Lower leg skin (tissue), 4 donors: ENCODE measurements at regions of chr7 and their contacts with region 1.

Region 1: GRCh38 chr7:28389504-28390395 is 22.6 kb upstream of the CREB5 start:
- DNase-seq: no peak
- H3K4me3 ChIP-seq: no peak overlapping the region
- CTCF ChIP-seq: peak in 1 of 3 donors; percentile 13
- POLR2A ChIP-seq: no peak

Region 2: DNA sequence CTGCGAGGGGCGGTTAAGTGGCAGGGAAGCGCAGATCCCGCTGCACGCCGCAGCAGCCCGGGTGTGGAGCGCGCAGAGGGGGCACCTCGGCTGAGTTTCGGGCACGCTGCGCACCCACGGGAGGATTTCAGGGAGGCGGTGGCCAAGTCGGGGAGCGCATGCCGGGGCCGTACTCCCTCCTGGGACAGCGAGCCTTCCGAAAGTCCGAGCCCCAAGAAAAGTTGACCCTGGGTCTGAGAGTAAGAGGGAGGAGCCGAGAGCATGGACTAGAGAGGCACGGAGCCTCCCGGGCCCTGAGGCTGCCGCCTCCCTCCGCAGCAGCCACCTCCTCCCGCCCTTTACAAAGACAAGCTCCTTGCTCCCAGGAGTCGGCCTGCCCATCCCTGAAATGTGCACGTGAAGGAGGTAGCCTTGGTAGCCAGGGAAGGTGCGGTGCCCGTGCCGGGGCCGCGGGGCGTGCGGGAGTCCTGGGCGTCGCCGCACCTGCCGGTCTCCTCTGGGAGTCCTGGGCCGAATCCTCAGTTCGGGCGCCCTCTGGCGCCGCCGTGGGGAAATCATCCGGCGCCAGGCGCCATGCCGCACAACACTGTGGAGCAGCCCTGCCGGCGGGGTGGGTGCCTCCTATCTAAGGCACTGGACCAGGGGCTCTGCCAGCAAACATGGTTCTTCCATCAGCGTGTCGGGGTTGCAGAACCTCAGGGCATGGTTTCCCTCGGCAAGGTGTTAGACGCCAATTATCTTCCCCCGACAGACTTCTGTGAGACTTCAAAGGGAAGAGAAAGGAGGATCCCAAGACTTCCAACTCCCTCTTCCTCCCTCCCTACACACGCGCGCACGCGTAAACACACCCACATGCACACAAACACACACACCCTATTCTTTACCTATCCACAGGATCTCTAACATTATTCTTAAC is 464.3 kb after region 1 on chr7:
- intact Hi-C with region 1: loop called (anchors 10 kb)
- DNase-seq: peak; percentile 76 to 95
- H3K4me3 ChIP-seq: peak overlapping the region; percentile 13
- CTCF ChIP-seq: peak in 1 of 3 donors; percentile 70
- POLR2A ChIP-seq: no peak